ENCODE measurements at regions of chr3 and their contacts with region 1.

Region 1: DNA sequence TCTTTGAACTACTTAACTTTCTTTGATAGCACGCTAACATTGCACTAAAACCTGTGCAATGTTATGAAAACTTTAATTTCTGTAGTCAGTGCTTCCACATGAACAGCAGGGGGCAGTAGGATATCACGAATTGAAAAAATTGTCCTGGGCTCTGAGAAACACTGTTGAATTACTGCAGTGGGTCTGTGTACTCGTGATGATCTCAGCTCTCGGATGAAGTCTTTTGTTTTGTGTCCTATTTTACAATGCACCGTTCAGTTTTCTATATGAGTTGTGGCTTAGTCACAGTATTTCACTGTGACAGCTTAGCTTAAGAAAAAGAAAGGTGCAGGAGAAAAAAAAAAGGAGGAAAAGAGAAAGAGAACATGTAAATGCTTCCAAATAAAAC is 141.3 kb upstream of the CCDC54 start:
- DNase-seq: peak; percentile 65 to 74 (median 68)
- H3K4me3 ChIP-seq: peak overlapping the region in 1 of 2 donors; percentile 32
- H3K4me3 Mint-ChIP-seq: peak overlapping the region; percentile 6 to 73 (median 49)
- H3K27ac ChIP-seq: no peak overlapping the region
- H3K27ac Mint-ChIP-seq: no peak overlapping the region
- H3K4me1 ChIP-seq: peaks cover 7% of the 10 kb centered on the region
- H3K4me1 Mint-ChIP-seq: peaks cover 9 to 13% (median 11%) of the 10 kb centered on the region in 4 donors
- H3K27me3 ChIP-seq: no peaks in the 10 kb centered on the region
- H3K27me3 Mint-ChIP-seq: peaks cover 4 to 5% of the 10 kb centered on the region in 2 donors

Region 2: GRCh38 chr3:107271787-107272387 is 36.0 kb after region 1 on chr3:
- CTCF ChIA-PET with region 1: interaction called, 13 read pairs
- POLR2A ChIA-PET with region 1: no interaction called
- intact Hi-C with region 1: no loop called
- DNase-seq: peak in 4 of 5 donors; percentile 15 to 27 (median 21)
- H3K4me3 ChIP-seq: no peak overlapping the region
- H3K4me3 Mint-ChIP-seq: no peak overlapping the region
- H3K27ac ChIP-seq: no peak overlapping the region
- H3K27ac Mint-ChIP-seq: no peak overlapping the region
- H3K4me1 ChIP-seq: no peaks in the 10 kb centered on the region
- H3K4me1 Mint-ChIP-seq: no peaks in the 10 kb centered on the region
- H3K27me3 ChIP-seq: no peaks in the 10 kb centered on the region
- H3K27me3 Mint-ChIP-seq: peaks cover 10 to 24% of the 10 kb centered on the region in 2 donors

Region 3: DNA sequence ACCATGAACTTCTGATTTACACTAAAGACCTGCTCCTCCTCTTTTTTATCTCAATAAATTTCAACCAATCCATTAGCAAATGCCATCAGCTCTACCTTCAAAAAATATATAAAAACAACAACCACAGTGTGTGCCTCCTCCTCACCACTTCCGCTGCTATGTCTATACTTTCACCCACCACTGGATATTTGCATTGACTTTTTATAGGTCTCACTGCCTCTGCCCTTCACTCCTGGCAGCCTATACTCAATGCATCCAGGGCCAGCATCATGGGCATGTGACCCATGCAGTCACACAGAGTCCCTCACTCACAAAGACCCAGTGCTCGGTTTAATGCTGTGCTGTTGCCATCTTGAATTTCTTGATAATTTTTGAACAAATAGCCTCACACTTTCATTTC is 87.8 kb after region 1 on chr3:
- CTCF ChIA-PET with region 1: no interaction called
- POLR2A ChIA-PET with region 1: no interaction called
- intact Hi-C with region 1: no loop called
- DNase-seq: no peak
- H3K4me3 ChIP-seq: no peak overlapping the region
- H3K4me3 Mint-ChIP-seq: no peak overlapping the region
- H3K27ac ChIP-seq: no peak overlapping the region
- H3K27ac Mint-ChIP-seq: no peak overlapping the region
- H3K4me1 ChIP-seq: no peaks in the 10 kb centered on the region
- H3K4me1 Mint-ChIP-seq: no peaks in the 10 kb centered on the region
- H3K27me3 ChIP-seq: peaks cover 4% of the 10 kb centered on the region
- H3K27me3 Mint-ChIP-seq: no peaks in the 10 kb centered on the region

Region 4: GRCh38 chr3:107458871-107459270 is 222.9 kb after region 1 on chr3:
- CTCF ChIA-PET with region 1: interaction called, 23 read pairs
- POLR2A ChIA-PET with region 1: no interaction called
- intact Hi-C with region 1: no loop called
- DNase-seq: no peak
- H3K4me3 ChIP-seq: no peak overlapping the region
- H3K4me3 Mint-ChIP-seq: no peak overlapping the region
- H3K27ac ChIP-seq: no peak overlapping the region
- H3K27ac Mint-ChIP-seq: no peak overlapping the region
- H3K4me1 ChIP-seq: no peaks in the 10 kb centered on the region
- H3K4me1 Mint-ChIP-seq: no peaks in the 10 kb centered on the region
- H3K27me3 ChIP-seq: no peaks in the 10 kb centered on the region
- H3K27me3 Mint-ChIP-seq: peaks cover 2 to 3% of the 10 kb centered on the region in 2 donors

Region 5: GRCh38 chr3:107676469-107677309 is 440.8 kb after region 1 on chr3:
- CTCF ChIA-PET with region 1: interaction called, 6 read pairs
- POLR2A ChIA-PET with region 1: no interaction called
- intact Hi-C with region 1: loop called (anchors 5 kb)
- DNase-seq: peak in 4 of 5 donors; percentile 14 to 33 (median 32)
- H3K4me3 ChIP-seq: no peak overlapping the region
- H3K4me3 Mint-ChIP-seq: no peak overlapping the region
- H3K27ac ChIP-seq: no peak overlapping the region
- H3K27ac Mint-ChIP-seq: no peak overlapping the region
- H3K4me1 ChIP-seq: peaks cover 3% of the 10 kb centered on the region
- H3K4me1 Mint-ChIP-seq: peaks cover 16 to 23% (median 21%) of the 10 kb centered on the region in 4 donors
- H3K27me3 ChIP-seq: no peaks in the 10 kb centered on the region
- H3K27me3 Mint-ChIP-seq: no peaks in the 10 kb centered on the region

Region 6: DNA sequence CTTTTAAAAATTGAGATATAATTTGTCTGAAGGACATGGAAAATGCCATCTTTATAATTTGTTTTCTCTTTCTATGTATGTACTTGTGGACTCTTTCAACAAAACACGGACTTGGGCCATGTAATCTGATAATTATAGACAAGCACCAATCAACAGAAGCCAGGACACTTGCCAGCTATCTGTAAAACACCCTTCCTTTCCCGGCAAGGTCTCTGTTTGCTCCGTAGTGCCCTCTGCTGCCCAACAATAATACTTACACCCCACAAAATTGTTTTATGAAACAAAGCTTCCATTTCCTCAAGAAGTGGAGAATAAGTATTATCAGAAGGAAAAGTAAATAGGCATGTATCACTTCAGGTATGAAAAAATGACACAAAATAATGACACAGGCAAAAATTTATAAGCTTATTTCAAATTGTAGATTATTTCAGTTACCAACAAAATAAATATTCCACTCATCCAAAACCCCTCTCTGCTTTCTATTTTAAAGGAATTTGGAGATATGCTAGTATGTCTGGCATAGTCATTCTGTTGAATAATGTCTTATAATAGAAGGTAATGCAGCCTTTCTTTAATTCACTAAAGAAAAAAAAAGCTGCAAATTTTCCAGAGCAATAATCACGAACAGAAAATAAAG is 1241.7 kb after region 1 on chr3:
- CTCF ChIA-PET with region 1: interaction called, 11 read pairs
- POLR2A ChIA-PET with region 1: no interaction called
- intact Hi-C with region 1: loop called (anchors 1 kb)
- DNase-seq: peak; percentile 45 to 57 (median 53)
- H3K4me3 ChIP-seq: no peak overlapping the region
- H3K4me3 Mint-ChIP-seq: no peak overlapping the region
- H3K27ac ChIP-seq: no peak overlapping the region
- H3K27ac Mint-ChIP-seq: no peak overlapping the region
- H3K4me1 ChIP-seq: no peaks in the 10 kb centered on the region
- H3K4me1 Mint-ChIP-seq: peaks cover 0 to 3% (median 2%) of the 10 kb centered on the region in 4 donors
- H3K27me3 ChIP-seq: no peaks in the 10 kb centered on the region
- H3K27me3 Mint-ChIP-seq: peaks cover 3 to 4% of the 10 kb centered on the region in 2 donors

Measured in CD4-positive, alpha-beta memory T cell (primary cell).